ENCODE measurements at regions of chr6 and their contacts with region 1.

Region 1: GRCh38 chr6:43687437-43688347 is at the start of gene MRPS18A:
- DNase-seq: peak; percentile 87

Region 2: DNA sequence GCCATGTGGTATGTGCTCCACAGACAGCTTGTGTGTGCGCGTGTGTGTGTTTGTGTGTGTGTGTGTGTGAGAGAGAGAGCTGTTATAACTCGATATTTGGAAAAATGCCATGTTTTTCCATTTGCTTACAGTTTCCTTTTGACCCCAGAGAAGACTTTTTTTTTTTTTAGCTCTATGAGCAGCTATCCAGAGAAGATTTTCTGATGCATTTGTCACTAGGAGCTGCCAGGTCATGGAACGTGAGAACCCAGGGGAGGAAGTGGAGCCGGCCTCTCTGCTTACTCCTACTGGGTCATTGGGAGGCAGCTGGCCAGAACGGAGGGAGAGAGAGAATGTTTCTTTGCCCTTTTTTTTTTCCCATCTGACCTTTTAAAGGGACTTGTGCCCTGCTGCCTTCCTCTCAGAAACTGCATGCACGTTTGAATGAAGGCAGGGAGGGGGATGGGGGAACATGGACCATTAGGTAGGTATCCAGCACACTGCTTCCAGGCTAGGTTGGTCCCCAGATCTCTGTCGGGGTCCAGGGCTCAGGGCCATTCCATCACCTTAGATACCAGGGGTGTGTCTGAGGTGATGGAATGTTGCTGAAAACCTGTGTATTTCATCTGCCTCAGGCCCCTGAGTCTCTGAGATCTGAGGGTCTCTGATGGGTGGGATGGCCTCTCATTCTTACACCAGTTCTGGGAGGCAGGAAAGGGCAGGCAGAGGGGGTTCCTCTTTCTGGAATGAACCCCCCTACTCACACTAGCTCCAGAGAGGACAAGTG is 11.1 kb after region 1 on chr6:
- CTCF ChIA-PET with region 1: interaction called, 3 read pairs
- POLR2A ChIA-PET with region 1: interaction called, 19 read pairs
- DNase-seq: no peak

Region 3: GRCh38 chr6:44430326-44430725 is 742.6 kb after region 1 on chr6:
- CTCF ChIA-PET with region 1: no interaction called
- POLR2A ChIA-PET with region 1: no interaction called
- DNase-seq: no peak

Measured in HEK293T (cell line).